ENCODE measurements at regions of chr10 and their contacts with region 1.

Region 1: GRCh38 chr10:52488606-52489485 is 174.8 kb downstream of the DKK1 start:
- DNase-seq: no peak
- H3K4me3 ChIP-seq: no peak overlapping the region
- H3K27ac ChIP-seq: no peak overlapping the region
- H3K4me1 ChIP-seq: no peaks in the 10 kb centered on the region
- H3K27me3 ChIP-seq: no peaks in the 10 kb centered on the region
- CTCF ChIP-seq: peak; percentile 67

Region 2: DNA sequence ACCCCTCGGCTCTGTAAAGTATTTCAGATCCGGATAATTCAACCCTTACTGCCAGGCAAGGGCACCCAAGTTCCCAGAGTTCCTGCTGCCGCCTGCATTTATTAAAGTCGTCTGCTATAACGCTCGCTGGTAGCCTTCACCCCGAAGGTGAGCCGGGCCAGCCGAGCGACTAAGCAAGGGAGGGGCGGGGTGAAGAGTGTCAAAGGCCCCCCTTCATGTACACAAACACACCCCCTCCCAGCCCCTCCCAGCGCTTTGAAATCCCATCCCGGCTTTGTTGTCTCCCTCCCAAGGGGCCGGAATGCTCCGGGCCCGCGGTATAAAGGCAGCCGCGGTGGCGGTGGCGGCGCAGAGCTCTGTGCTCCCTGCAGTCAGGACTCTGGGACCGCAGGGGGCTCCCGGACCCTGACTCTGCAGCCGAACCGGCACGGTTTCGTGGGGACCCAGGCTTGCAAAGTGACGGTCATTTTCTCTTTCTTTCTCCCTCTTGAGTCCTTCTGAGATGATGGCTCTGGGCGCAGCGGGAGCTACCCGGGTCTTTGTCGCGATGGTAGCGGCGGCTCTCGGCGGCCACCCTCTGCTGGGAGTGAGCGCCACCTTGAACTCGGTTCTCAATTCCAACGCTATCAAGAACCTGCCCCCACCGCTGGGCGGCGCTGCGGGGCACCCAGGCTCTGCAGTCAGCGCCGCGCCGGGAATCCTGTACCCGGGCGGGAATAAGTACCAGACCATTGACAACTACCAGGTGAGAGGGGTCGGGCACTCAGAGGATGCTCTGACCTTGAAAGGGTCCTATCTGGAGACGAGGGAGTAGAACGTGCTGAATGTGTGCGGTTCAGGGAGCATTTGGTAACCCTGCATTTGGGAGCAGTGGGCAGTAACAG is 174.7 kb before region 1 on chr10 and contains the start of gene DKK1:
- intact Hi-C with region 1: loop called (anchors 5 kb)
- DNase-seq: peak; percentile 41
- H3K4me3 ChIP-seq: peak within 1 kb of the TSS; percentile 72
- H3K27ac ChIP-seq: no peak within 1 kb of the TSS
- H3K4me1 ChIP-seq: peaks cover 20% of the 10 kb centered on the region
- H3K27me3 ChIP-seq: peaks cover 43% of the 10 kb centered on the region
- CTCF ChIP-seq: peak; percentile 69
- total RNA-seq, gene DKK1: not detected

Measured in left ventricle myocardium inferior (tissue), 1 donor.